Activated naive CD8-positive, alpha-beta T cell treated with anti-CD3 and anti-CD28 coated beads, Interleukin-2, amount 10 ng/mL, durations not matched to agents 7 days and 5 days (primary cell): ENCODE measurements at regions of chr16 and their contacts with region 1.

Region 1: DNA sequence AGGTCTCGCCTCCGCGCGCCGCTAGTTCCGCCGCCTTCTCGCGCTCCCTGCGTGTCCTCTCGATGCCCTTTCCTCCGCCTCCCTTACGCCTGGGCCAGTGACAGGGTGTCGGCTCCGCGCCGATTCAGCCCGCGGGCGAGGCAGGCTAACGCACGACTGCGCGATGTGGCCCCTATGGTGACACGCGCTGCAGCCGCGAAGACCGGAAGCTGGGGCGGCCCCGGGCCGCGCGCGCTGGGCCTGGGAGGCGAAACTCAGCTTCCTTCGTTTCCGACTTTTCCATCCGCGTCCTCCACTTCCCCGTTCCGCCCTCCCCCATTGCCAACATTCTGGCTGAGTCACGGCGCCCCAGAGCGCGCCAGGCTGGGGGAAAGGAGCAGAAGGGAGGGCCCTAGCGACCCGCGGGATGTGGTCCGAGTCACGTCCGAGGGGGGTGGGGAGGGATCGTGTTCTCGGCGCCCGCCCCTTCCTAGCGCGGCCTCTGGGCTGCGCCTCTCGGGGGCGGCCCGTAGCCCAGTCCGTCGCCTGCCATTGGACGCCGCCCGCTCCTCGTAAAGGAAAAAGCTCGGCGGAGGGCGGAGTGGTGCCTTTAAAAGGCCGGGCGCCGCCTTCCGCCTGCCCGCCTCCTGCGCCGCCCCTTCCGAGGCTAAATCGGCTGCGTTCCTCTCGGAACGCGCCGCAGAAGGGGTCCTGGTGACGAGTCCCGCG is at the start of gene ALDOA:
- DNase-seq: peak; percentile 95
- ATAC-seq: peak; percentile 85
- H3K4me3 Mint-ChIP-seq: peak within 1 kb of the TSS; percentile 100
- H3K27ac Mint-ChIP-seq: peak within 1 kb of the TSS; percentile 98
- H3K4me1 Mint-ChIP-seq: peaks cover 22% of the 10 kb centered on the region
- H3K27me3 Mint-ChIP-seq: no peaks in the 10 kb centered on the region
- total RNA-seq, gene ALDOA: 1,486 to 1,632 TPM

Region 2: DNA sequence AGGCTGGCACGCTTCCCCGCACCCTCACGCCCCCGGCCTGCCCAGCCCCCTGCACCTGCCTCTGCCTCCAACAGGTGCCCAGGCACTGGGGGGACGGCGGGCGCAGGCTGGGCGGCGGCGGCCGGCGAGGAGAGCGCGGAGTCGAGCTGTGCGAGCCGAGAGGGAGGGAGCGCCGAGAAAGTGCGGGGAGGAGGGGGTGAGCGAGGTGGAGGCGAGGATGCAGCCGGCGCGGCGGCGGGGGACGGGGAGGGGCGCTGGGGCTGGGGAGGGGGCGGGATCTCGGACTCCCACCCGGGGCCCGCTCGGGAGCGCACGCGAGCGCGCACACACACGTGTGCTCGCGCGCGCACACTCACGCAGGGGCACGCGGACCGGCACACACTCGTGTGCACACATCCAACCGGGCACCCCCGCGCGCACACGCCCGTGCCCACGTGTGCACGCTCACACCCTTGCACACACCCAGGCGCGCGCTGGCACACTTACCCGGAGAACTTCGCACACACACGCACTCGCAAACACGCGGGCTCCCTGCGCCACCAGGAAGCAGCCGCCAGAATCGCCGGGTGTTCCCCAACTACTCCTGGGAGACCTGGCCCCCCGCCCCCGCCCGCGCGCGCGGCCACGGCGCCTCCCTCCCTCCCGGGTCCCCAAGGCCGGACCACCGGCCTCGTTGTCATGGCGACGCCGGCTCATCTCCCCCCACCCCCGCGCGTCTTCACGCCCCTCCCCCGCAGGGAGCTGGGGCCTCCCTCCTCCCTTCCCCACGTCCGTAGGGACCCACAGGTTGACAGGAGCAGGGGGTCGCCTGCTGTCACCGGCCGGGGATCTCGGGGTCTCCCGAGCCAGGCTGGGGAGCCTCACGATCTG is 54.2 kb before region 1 on chr16 and contains the start of gene DOC2A:
- POLR2A ChIA-PET with region 1: no interaction called
- DNase-seq: peak; percentile 54
- ATAC-seq: peak; percentile 48
- H3K4me3 Mint-ChIP-seq: peak within 1 kb of the TSS; percentile 87
- H3K27ac Mint-ChIP-seq: no peak within 1 kb of the TSS
- H3K4me1 Mint-ChIP-seq: peaks cover 3% of the 10 kb centered on the region
- H3K27me3 Mint-ChIP-seq: peaks cover 34% of the 10 kb centered on the region
- total RNA-seq, gene DOC2A: not detected

Region 3: DNA sequence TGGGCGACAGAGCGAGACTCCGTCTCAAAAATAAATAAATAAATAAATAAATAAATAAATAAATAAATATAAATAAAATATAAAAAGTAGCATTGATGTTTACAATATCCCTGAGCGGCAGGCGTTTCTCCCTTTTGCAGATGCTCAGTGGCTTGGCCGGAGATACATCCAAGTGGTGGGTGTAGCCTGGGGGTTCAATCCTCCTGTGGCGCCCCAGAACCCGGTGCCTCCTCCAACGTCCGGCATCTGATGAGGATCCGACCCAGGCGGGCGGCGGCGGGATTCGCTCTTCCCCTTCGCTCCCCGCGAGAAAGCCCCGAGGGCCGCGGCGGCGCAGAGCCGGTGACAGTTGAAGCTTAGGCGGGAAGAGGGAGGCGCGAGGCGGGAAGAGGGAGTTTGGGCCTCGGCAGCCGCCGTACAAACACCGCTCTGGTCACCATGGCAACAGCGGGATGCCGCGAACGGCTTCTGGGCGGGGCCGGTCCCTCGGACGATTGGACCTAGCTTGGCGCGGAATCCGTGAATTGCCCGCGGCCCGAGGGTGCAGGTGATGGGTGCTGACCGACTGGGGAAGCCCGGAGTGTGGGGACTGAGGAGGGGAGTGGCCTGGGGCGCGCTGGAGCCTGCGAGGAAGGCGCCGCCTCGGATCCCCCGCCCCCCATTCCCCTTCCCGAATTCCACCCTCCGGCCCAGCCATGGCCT is 12.5 kb before region 1 on chr16:
- POLR2A ChIA-PET with region 1: interaction called, 15 read pairs
- DNase-seq: peak; percentile 95
- ATAC-seq: peak; percentile 76
- H3K4me3 Mint-ChIP-seq: peak overlapping the region; percentile 87
- H3K27ac Mint-ChIP-seq: peak overlapping the region; percentile 67
- H3K4me1 Mint-ChIP-seq: peaks cover 21% of the 10 kb centered on the region
- H3K27me3 Mint-ChIP-seq: no peaks in the 10 kb centered on the region

Region 4: GRCh38 chr16:30075507-30076275 is 10.4 kb after region 1 on chr16 and contains the start of gene PPP4C:
- POLR2A ChIA-PET with region 1: interaction called, 56 read pairs
- DNase-seq: peak; percentile 96
- ATAC-seq: peak; percentile 85
- H3K4me3 Mint-ChIP-seq: peak within 1 kb of the TSS; percentile 88
- H3K27ac Mint-ChIP-seq: peak within 1 kb of the TSS; percentile 93
- H3K4me1 Mint-ChIP-seq: peaks cover 29% of the 10 kb centered on the region
- H3K27me3 Mint-ChIP-seq: no peaks in the 10 kb centered on the region
- total RNA-seq, gene PPP4C: 123 to 133 TPM

Region 5: GRCh38 chr16:30091474-30092372 is 26.4 kb after region 1 on chr16 and contains the start of gene TBX6:
- POLR2A ChIA-PET with region 1: interaction called, 102 read pairs
- DNase-seq: peak; percentile 97
- ATAC-seq: peak; percentile 77
- H3K4me3 Mint-ChIP-seq: peak within 1 kb of the TSS; percentile 86
- H3K27ac Mint-ChIP-seq: peak within 1 kb of the TSS; percentile 96
- H3K4me1 Mint-ChIP-seq: peaks cover 47% of the 10 kb centered on the region
- H3K27me3 Mint-ChIP-seq: no peaks in the 10 kb centered on the region
- total RNA-seq, gene TBX6: 2.4 to 3.0 TPM

Region 6: GRCh38 chr16:30110661-30111060 is 45.4 kb after region 1 on chr16:
- POLR2A ChIA-PET with region 1: no interaction called
- DNase-seq: no peak
- ATAC-seq: no peak
- H3K4me3 Mint-ChIP-seq: no peak overlapping the region
- H3K27ac Mint-ChIP-seq: no peak overlapping the region
- H3K4me1 Mint-ChIP-seq: peaks cover 9% of the 10 kb centered on the region
- H3K27me3 Mint-ChIP-seq: no peaks in the 10 kb centered on the region